A549 (cell line): ENCODE measurements at regions of chr2 and their contacts with region 1.

Region 1: DNA sequence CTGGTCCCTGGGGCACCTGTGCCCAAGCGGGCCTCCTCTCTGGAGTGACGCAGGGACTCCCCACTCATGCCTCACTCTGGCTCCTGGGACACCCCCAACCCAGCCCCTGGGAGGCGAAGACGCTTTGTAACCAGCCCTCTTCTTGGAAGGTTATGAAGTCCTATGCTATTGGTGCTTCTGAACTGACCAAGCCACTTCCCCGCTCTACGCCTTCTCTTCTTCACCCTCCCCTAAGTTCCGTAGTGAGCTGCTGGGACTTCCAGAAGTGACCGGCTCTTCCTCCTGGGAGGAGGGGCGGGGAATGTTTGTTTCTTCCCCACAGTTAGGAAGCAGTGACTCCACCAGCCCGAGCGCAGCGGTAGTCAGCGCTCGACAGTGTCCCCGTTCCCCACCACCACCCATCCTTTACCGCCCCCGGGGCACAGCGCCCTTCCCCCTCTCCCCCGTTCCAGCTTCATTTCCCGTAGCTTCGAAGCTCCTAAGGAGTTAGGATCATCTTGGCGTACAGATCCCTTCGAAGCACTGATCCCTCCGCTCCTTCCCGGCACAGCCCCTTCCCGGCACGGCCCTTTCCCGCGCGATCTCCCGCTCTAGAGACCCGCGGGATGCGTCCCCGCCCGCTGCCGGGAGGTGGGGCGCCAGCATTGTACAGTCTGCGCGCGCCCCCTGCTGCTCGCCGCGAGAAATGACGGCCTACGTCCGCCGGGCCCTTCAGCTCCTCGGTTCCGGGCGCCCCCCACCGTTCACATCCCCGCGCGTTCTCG is 25.3 kb upstream of the NOTO start:
- DNase-seq: peak; percentile 87 to 95
- ATAC-seq: peak; percentile 86 to 96
- H3K4me3 ChIP-seq: peak overlapping the region; percentile 50
- H3K27ac ChIP-seq: peak overlapping the region; percentile 67 to 86
- H3K4me1 ChIP-seq: peaks cover 11% of the 10 kb centered on the region
- CTCF ChIP-seq: peak; percentile 99
- EP300 ChIP-seq: no peak
- POLR2A ChIP-seq: 0 out of 2 replicates have a peak, but pooled peaks have one; percentile 18
- RAD21 ChIP-seq: peak; percentile 90 to 98

Region 2: GRCh38 chr2:72953976-72954375 is 223.1 kb before region 1 on chr2:
- CTCF ChIA-PET with region 1: interaction called, 17 read pairs
- POLR2A ChIA-PET with region 1: no interaction called
- DNase-seq: no peak
- ATAC-seq: no peak
- H3K4me3 ChIP-seq: no peak overlapping the region
- H3K27ac ChIP-seq: no peak overlapping the region
- H3K4me1 ChIP-seq: no peaks in the 10 kb centered on the region
- CTCF ChIP-seq: no peak
- EP300 ChIP-seq: no peak
- POLR2A ChIP-seq: no peak
- RAD21 ChIP-seq: no peak

Region 3: GRCh38 chr2:72993147-72993932 is 183.7 kb before region 1 on chr2:
- CTCF ChIA-PET with region 1: interaction called, 64 read pairs
- POLR2A ChIA-PET with region 1: no interaction called
- DNase-seq: peak; percentile 42 to 89
- ATAC-seq: peak; percentile 33 to 79; a peak in 4 of 6 replicates
- H3K4me3 ChIP-seq: no peak overlapping the region
- H3K27ac ChIP-seq: no peak overlapping the region
- H3K4me1 ChIP-seq: no peaks in the 10 kb centered on the region
- CTCF ChIP-seq: peak; percentile 90
- EP300 ChIP-seq: no peak
- POLR2A ChIP-seq: no peak
- RAD21 ChIP-seq: peak; percentile 63 to 77

Region 4: DNA sequence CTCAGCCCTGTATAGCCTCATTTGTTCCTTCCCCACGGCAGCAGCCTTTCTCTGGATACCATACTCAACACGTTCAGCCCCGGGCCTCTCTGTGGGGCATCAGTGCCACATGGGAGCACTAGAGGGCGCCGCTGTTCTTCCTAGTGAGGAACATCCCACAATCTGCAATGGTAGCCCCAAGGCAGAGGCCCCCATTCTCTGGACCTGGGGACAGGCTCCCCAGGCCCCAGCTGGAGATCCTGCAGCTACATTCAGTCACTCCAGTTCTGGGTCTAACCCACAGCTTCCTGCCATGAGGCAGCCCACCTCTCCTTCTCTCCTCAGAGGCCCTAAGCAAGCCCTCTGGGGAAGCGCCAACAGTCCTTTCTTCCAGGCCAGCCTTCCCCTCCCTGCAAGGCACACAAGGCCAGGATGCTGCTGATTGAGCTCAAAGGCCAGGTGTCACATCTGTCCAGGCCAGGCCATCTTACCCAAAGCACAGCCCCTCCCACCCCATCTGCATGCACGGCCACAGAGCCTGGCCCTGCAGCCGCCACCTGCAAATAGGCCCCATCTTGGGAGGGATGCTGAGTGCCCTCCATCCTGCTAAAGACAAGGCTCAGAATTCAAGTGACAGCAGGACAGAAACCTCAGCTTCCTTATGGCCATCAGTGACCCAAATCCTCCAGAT is 91.2 kb before region 1 on chr2:
- CTCF ChIA-PET with region 1: interaction called, 205 read pairs
- POLR2A ChIA-PET with region 1: no interaction called
- DNase-seq: peak; percentile 74 to 87
- ATAC-seq: peak; percentile 78 to 92; a peak in 5 of 6 replicates
- H3K4me3 ChIP-seq: no peak overlapping the region
- H3K27ac ChIP-seq: no peak overlapping the region
- H3K4me1 ChIP-seq: peaks cover 18% of the 10 kb centered on the region
- CTCF ChIP-seq: peak; percentile 98
- EP300 ChIP-seq: no peak
- POLR2A ChIP-seq: no peak
- RAD21 ChIP-seq: peak; percentile 97 to 98

Region 5: GRCh38 chr2:73187549-73187948 is 10.5 kb after region 1 on chr2:
- CTCF ChIA-PET with region 1: interaction called, 151 read pairs
- POLR2A ChIA-PET with region 1: no interaction called
- DNase-seq: no peak
- ATAC-seq: no peak; a peak in 1 of 6 replicates
- H3K4me3 ChIP-seq: no peak overlapping the region
- H3K27ac ChIP-seq: no peak overlapping the region
- H3K4me1 ChIP-seq: no peaks in the 10 kb centered on the region
- CTCF ChIP-seq: no peak
- EP300 ChIP-seq: no peak
- POLR2A ChIP-seq: no peak
- RAD21 ChIP-seq: no peak

Region 6: DNA sequence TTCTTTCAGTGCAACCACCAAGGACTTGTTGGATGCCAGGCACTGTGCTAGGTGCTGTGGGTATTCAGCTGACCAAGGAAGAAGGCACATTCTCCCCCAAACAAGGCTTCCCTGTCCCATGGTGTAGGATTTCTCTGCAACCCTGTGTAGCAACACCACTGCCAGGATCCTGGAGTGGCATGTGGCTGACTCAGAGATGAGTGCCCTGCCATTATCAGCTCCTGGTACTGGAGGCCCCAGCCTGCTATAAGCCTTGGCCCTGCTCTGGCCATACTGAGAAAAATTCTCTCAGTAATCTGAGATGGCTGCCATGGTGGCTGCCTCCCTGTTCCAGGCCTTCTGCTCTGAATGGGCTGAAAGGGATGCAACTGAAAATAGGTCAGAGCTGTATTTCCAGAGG is 41.2 kb after region 1 on chr2:
- CTCF ChIA-PET with region 1: interaction called, 173 read pairs
- POLR2A ChIA-PET with region 1: interaction called, 5 read pairs
- DNase-seq: no peak
- ATAC-seq: no peak
- H3K4me3 ChIP-seq: no peak overlapping the region
- H3K27ac ChIP-seq: no peak overlapping the region
- H3K4me1 ChIP-seq: peaks cover 9% of the 10 kb centered on the region
- CTCF ChIP-seq: no peak
- EP300 ChIP-seq: no peak
- POLR2A ChIP-seq: no peak
- RAD21 ChIP-seq: no peak